ENCODE measurements at regions of chr2 and their contacts with region 1.

Region 1: DNA sequence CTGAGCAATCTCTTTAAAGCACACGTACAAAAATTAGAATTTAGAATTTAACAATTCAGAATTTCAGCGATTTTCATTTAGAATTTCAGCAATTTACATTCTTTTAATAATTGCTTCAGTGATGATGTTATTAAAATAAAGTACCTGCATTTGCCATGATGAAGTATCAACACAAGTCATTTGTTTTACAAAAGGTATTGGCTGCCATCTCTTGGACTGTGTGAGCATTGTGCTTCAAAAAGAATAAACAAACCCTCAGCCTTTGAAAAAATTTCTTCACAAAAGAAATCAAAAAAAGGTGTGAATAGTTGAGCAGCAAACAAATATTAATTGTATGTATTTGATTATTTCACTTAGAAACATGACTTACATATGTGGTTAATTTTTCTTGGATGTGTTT is 27.1 kb upstream of the ZC3H15 start:
- DNase-seq: peak in 2 of 9 donors; percentile 3 to 4
- ATAC-seq: no peak
- H3K4me3 ChIP-seq: no peak overlapping the region
- H3K4me3 Mint-ChIP-seq: no peak overlapping the region
- H3K27ac ChIP-seq: no peak overlapping the region
- H3K27ac Mint-ChIP-seq: no peak overlapping the region
- H3K4me1 ChIP-seq: no peaks in the 10 kb centered on the region
- H3K4me1 Mint-ChIP-seq: no peaks in the 10 kb centered on the region
- H3K27me3 ChIP-seq: no peaks in the 10 kb centered on the region
- H3K27me3 Mint-ChIP-seq: no peaks in the 10 kb centered on the region

Region 2: DNA sequence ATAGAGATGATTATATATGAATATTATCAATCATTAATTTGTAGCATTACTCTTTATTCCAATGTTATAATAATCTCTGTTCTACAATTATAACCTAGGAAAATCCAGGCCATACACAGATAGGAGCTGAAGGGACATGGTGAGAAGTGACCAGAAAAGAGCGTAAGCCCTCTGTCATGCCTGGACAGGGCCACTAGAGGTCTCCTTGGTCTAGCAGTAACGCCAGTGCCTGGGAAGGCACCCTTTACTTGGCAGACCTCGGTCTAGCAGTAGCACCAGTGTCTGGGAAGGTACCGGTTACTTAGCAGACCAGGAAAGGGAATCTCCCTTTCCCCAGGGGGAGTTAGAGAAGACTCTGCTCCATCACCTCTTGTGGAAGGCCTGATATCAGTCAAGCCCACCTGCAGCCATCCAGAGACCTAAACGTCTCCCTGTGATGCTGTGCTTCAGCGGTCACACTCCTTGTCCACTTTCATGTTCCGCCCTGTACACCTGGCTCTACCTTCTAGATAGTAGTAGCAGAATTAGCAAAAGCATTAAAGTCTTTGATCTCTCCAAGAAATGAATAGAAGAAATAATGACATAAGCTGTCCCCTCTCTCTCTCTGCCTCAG is 1167.9 kb before region 1 on chr2:
- CTCF ChIA-PET with region 1: interaction called, 3 read pairs
- POLR2A ChIA-PET with region 1: no interaction called
- intact Hi-C with region 1: loop called in 1 of 2 experiments (anchors 5 kb)
- DNase-seq: peak in 1 of 9 donors; percentile 6
- ATAC-seq: no peak
- H3K4me3 ChIP-seq: no peak overlapping the region
- H3K4me3 Mint-ChIP-seq: no peak overlapping the region
- H3K27ac ChIP-seq: no peak overlapping the region
- H3K27ac Mint-ChIP-seq: no peak overlapping the region
- H3K4me1 ChIP-seq: no peaks in the 10 kb centered on the region
- H3K4me1 Mint-ChIP-seq: no peaks in the 10 kb centered on the region
- H3K27me3 ChIP-seq: no peaks in the 10 kb centered on the region
- H3K27me3 Mint-ChIP-seq: no peaks in the 10 kb centered on the region

Region 3: DNA sequence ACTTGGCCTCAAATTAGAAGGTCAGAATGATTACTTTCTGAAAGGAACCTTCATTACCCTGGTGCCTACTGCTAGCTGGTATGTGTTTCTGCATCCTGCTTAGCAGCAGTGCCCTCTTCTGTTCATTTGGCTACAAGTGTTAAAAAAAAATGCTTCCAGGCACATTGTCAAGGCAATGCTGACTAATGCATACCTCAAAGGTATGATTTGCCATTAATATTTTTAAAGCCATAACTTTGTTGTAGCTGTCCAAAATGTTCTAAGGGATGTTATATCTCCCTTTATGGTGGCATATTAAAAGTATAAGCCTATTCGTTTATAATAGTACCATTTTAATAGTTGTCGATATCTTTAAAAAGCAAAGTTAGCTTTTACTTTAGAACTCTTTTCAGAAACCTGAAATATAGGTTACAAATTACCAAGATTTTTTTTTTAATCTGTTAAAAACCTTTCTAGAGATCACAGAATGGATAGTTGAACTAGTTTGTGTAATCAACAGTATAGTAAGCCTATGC is 182.9 kb after region 1 on chr2:
- CTCF ChIA-PET with region 1: no interaction called
- POLR2A ChIA-PET with region 1: no interaction called
- intact Hi-C with region 1: no loop called
- DNase-seq: peak in 6 of 9 donors; percentile 13 to 54 (median 45)
- ATAC-seq: peak; percentile 73
- H3K4me3 ChIP-seq: no peak overlapping the region
- H3K4me3 Mint-ChIP-seq: no peak overlapping the region
- H3K27ac ChIP-seq: no peak overlapping the region
- H3K27ac Mint-ChIP-seq: peak overlapping the region in 1 of 9 donors; percentile 18
- H3K4me1 ChIP-seq: no peaks in the 10 kb centered on the region
- H3K4me1 Mint-ChIP-seq: peaks cover 0 to 26% (median 0%) of the 10 kb centered on the region in 7 donors
- H3K27me3 ChIP-seq: no peaks in the 10 kb centered on the region
- H3K27me3 Mint-ChIP-seq: no peaks in the 10 kb centered on the region